ENCODE measurements at regions of chr16 and their contacts with region 1.

Region 1: GRCh38 chr16:11255737-11256660 is at the start of gene SOCS1:
- DNase-seq: peak; percentile 96
- H3K4me3 Mint-ChIP-seq: peak within 1 kb of the TSS; percentile 92
- H3K27ac Mint-ChIP-seq: peak within 1 kb of the TSS; percentile 85
- H3K4me1 Mint-ChIP-seq: peaks cover 29% of the 10 kb centered on the region
- H3K27me3 Mint-ChIP-seq: no peaks in the 10 kb centered on the region
- CTCF ChIP-seq: peak; percentile 98
- total RNA-seq, gene SOCS1: 4.8 and 5.8 TPM in 2 replicates

Region 2: GRCh38 chr16:10964039-10964890 is 291.7 kb before region 1 on chr16:
- CTCF ChIA-PET with region 1: interaction called, 34 read pairs
- intact Hi-C with region 1: no loop called
- DNase-seq: peak; percentile 91
- H3K4me3 Mint-ChIP-seq: no peak overlapping the region
- H3K27ac Mint-ChIP-seq: no peak overlapping the region
- H3K4me1 Mint-ChIP-seq: no peaks in the 10 kb centered on the region
- H3K27me3 Mint-ChIP-seq: no peaks in the 10 kb centered on the region
- CTCF ChIP-seq: peak; percentile 95

Region 3: GRCh38 chr16:10981697-10982216 is 274.2 kb before region 1 on chr16:
- CTCF ChIA-PET with region 1: interaction called, 25 read pairs
- intact Hi-C with region 1: no loop called
- DNase-seq: peak; percentile 37
- H3K4me3 Mint-ChIP-seq: no peak overlapping the region
- H3K27ac Mint-ChIP-seq: no peak overlapping the region
- H3K4me1 Mint-ChIP-seq: peaks cover 21% of the 10 kb centered on the region
- H3K27me3 Mint-ChIP-seq: no peaks in the 10 kb centered on the region
- CTCF ChIP-seq: no peak

Region 4: GRCh38 chr16:11105038-11105903 is 150.7 kb before region 1 on chr16:
- CTCF ChIA-PET with region 1: interaction called, 12 read pairs
- intact Hi-C with region 1: loop called (anchors 10 kb)
- DNase-seq: no peak
- H3K4me3 Mint-ChIP-seq: no peak overlapping the region
- H3K27ac Mint-ChIP-seq: no peak overlapping the region
- H3K4me1 Mint-ChIP-seq: peaks cover 31% of the 10 kb centered on the region
- H3K27me3 Mint-ChIP-seq: no peaks in the 10 kb centered on the region
- CTCF ChIP-seq: no peak

Region 5: GRCh38 chr16:11205754-11206581 is 50.0 kb before region 1 on chr16:
- CTCF ChIA-PET with region 1: interaction called, 3 read pairs
- intact Hi-C with region 1: loop called (anchors 5 kb)
- DNase-seq: peak; percentile 77
- H3K4me3 Mint-ChIP-seq: no peak overlapping the region
- H3K27ac Mint-ChIP-seq: peak overlapping the region; percentile 15
- H3K4me1 Mint-ChIP-seq: peaks cover 37% of the 10 kb centered on the region
- H3K27me3 Mint-ChIP-seq: peaks cover 6% of the 10 kb centered on the region
- CTCF ChIP-seq: no peak

Region 6: DNA sequence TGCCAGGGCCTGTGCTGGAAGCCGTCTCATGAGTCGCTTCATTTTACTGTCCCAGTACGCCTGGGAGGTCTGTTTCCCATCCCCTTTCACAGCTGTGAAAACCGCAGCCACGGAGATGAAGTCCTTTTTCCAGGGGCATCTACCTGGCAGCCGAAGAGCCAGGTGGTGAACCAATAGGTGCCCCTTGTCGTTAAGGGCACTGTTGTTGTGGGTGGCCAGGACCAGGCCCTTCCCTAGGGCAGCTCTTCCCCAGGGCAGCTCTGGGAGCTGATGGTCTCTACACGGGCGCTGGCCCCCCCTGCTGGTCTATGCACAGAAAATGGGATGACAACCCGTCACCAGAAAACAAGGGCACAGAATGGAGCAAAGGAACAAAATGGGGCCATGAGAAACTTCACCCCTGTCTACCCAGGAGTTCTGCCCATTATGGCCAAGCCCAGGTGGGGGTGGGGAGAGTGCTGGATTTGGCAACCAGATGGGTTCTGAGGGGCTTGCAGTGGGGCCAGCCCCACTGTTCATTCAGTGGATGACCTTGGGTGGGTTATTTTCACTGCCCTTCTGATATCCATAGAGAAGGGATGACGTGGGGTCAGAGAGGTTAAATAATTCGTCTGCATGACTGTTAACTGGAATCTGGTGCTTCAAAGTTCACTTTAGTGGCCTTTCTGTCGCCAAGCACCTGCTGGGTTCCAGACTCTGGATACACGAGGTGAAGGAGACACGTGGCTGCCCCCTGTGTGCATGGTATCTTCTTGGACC is 100.8 kb after region 1 on chr16:
- CTCF ChIA-PET with region 1: interaction called, 17 read pairs
- intact Hi-C with region 1: loop called (anchors 5 kb)
- DNase-seq: peak; percentile 71
- H3K4me3 Mint-ChIP-seq: no peak overlapping the region
- H3K27ac Mint-ChIP-seq: no peak overlapping the region
- H3K4me1 Mint-ChIP-seq: peaks cover 47% of the 10 kb centered on the region
- H3K27me3 Mint-ChIP-seq: no peaks in the 10 kb centered on the region
- CTCF ChIP-seq: no peak